Heart left ventricle (tissue), 16 donors: ENCODE measurements at regions of chr2 and their contacts with region 1.

Region 1: DNA sequence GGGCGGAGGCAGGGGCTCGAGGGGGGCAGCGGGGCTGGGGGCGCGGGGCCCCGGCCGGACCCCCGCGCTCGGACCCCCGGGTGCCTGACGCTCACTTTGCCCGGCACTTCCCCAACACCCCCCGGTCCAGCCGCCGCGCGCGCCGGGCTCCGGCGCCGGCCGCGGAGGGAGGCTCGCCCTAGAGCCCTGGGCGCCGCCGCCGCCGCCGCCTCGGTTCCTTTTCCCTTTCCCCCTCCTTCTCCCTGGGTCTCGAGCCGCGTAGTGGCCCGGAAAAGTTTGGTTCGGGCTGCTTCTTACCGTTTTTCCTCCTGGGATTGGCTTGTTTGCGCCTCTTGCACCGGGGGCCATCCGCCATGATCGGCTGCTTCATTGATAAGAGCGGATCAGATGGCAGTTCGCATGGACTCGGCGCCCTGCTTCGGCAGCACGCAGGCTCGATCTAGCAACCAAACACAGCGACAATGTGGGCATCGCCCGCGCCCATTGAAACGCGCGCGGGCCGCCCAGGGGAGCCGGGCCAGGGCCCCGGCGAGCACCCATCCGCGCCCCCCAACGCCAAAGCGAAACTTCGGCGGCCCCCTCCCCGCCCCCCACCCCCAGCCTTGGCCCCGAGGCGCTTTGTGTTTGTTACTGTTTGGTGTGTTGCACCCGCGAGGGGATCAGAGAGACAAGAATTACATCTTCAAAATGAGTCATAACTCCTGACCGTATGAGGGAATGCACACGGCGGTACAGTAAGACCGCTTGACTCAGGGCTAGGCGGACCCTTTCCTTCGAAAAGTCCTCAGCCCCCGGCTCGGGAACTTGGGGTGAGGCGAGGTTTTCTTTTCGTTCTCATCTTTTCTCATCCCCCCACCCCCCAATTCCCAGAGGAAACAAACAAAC is 2.7 kb downstream of the ZEB2 start:
- DNase-seq: peak; percentile 56 to 82 (median 73)
- ATAC-seq: peak; percentile 9 to 71 (median 54)
- H3K4me3 ChIP-seq: peak overlapping the region; percentile 63 to 96 (median 82)
- H3K27ac ChIP-seq: peak overlapping the region; percentile 91 to 99 (median 98)
- H3K4me1 ChIP-seq: peaks cover 0 to 31% (median 13%) of the 10 kb centered on the region in 12 donors
- H3K27me3 ChIP-seq: peaks cover 0 to 6% (median 0%) of the 10 kb centered on the region in 9 donors
- CTCF ChIP-seq: no peak
- POLR2A ChIP-seq: peak in 1 of 2 donors; percentile 17

Region 2: GRCh38 chr2:144048631-144049060 is 468.6 kb before region 1 on chr2:
- intact Hi-C with region 1: no loop called
- DNase-seq: no peak
- ATAC-seq: no peak
- H3K4me3 ChIP-seq: no peak overlapping the region
- H3K27ac ChIP-seq: no peak overlapping the region
- H3K4me1 ChIP-seq: peaks cover 0 to 5% (median 0%) of the 10 kb centered on the region in 12 donors
- H3K27me3 ChIP-seq: no peaks in the 10 kb centered on the region
- CTCF ChIP-seq: no peak
- POLR2A ChIP-seq: no peak

Region 3: GRCh38 chr2:144152817-144153271 is 364.4 kb before region 1 on chr2:
- intact Hi-C with region 1: loop called in 2 of 10 experiments (anchors 10 kb)
- DNase-seq: no peak
- ATAC-seq: peak in 3 of 4 donors; percentile 52 to 66 (median 60)
- H3K4me3 ChIP-seq: no peak overlapping the region
- H3K27ac ChIP-seq: peak overlapping the region in 2 of 12 donors; percentile 22 to 37
- H3K4me1 ChIP-seq: peaks cover 0 to 17% (median 0%) of the 10 kb centered on the region in 12 donors
- H3K27me3 ChIP-seq: no peaks in the 10 kb centered on the region
- CTCF ChIP-seq: peak in 1 of 12 donors; percentile 16
- POLR2A ChIP-seq: no peak

Region 4: DNA sequence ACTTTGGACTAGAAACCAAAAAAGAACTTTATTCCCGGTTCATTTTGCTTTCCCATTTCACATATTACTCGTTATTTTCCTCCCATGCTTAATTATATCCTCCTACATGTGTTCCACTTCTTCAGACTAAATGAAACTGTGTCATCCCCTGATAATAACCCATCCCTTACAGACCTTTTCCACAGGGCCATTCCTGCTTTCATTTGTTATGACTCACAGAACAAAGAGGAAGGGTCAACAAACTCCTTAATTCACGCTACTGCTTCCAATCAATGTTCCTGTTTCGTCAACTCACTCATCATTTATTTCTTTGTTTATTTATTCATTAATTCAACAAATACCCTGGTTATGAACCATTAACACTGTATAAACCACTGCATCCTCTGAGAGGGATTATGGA is 101.8 kb before region 1 on chr2:
- intact Hi-C with region 1: no loop called
- DNase-seq: no peak
- ATAC-seq: no peak
- H3K4me3 ChIP-seq: no peak overlapping the region
- H3K27ac ChIP-seq: peak overlapping the region in 2 of 12 donors; percentile 36 to 79
- H3K4me1 ChIP-seq: peaks cover 0 to 38% (median 4%) of the 10 kb centered on the region in 12 donors
- H3K27me3 ChIP-seq: no peaks in the 10 kb centered on the region
- CTCF ChIP-seq: no peak
- POLR2A ChIP-seq: no peak

Region 5: GRCh38 chr2:144430722-144431391 is 86.4 kb before region 1 on chr2:
- intact Hi-C with region 1: loop called in 3 of 10 experiments (anchors 5 kb)
- DNase-seq: peak in 2 of 5 donors; percentile 44 to 46
- ATAC-seq: peak; percentile 81 to 85 (median 82)
- H3K4me3 ChIP-seq: peak overlapping the region in 10 of 12 donors; percentile 3 to 50 (median 35)
- H3K27ac ChIP-seq: peak overlapping the region; percentile 37 to 82 (median 75)
- H3K4me1 ChIP-seq: peaks cover 0 to 97% (median 51%) of the 10 kb centered on the region in 12 donors
- H3K27me3 ChIP-seq: no peaks in the 10 kb centered on the region
- CTCF ChIP-seq: no peak
- POLR2A ChIP-seq: no peak

Region 6: DNA sequence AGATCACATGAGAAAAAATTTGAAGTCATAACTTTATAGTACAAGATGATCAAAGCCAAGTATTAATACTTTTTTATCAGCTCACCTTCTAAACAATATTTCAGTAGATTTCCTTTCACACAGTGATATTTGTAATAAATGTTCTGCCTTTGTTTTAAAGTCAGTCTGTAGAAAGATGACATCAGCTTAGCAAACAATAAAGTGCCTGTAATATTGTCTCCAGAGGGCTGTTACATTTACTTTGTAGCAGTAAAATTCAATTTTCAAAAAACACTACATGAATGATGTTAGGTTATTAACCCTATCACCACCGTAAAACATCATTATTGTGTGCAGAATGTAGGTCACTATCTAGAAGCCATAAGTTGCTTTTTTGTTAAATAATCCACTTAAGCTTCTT is 46.9 kb before region 1 on chr2:
- intact Hi-C with region 1: no loop called
- DNase-seq: no peak
- ATAC-seq: no peak
- H3K4me3 ChIP-seq: no peak overlapping the region
- H3K27ac ChIP-seq: peak overlapping the region in 1 of 12 donors; percentile 29
- H3K4me1 ChIP-seq: peaks cover under 1 to 98% (median 52%) of the 10 kb centered on the region in 12 donors
- H3K27me3 ChIP-seq: no peaks in the 10 kb centered on the region
- CTCF ChIP-seq: no peak
- POLR2A ChIP-seq: no peak

Region 7: GRCh38 chr2:144560251-144560650 is 43.0 kb after region 1 on chr2:
- intact Hi-C with region 1: no loop called
- DNase-seq: no peak
- ATAC-seq: no peak
- H3K4me3 ChIP-seq: no peak overlapping the region
- H3K27ac ChIP-seq: peak overlapping the region in 1 of 12 donors; percentile 27
- H3K4me1 ChIP-seq: peaks cover 0 to 6% (median 0%) of the 10 kb centered on the region in 12 donors
- H3K27me3 ChIP-seq: no peaks in the 10 kb centered on the region
- CTCF ChIP-seq: no peak
- POLR2A ChIP-seq: no peak

Region 8: DNA sequence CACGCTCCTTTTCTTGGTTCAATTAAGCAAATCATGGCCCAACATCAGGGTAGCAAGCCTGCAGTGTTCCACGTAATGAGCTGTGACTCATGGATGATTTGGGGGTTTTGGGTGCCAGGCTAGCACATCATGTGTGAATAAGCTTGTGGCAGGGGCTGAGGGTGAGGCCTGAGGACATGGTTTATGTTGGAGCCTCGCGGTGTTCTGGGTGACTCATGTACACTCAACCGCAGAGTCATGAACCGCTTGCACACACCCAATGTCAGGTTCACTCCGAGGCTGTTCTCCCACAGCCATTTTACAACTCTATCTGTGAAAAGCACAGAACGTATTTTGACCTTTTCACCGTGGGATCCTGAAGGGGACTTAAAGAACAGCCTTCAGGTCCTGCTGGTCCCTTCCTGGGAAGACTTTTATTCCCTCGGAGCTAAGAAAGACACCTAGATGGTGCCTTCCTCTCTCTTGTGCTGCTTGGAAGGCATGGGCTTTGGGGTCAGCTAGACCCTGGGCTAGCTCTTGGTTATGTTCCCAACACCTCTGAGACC is 142.6 kb after region 1 on chr2:
- intact Hi-C with region 1: loop called in 1 of 10 experiments (anchors 10 kb)
- DNase-seq: peak in 1 of 5 donors; percentile 31
- ATAC-seq: peak in 3 of 4 donors; percentile 31 to 56 (median 40)
- H3K4me3 ChIP-seq: no peak overlapping the region
- H3K27ac ChIP-seq: peak overlapping the region in 4 of 12 donors; percentile 4 to 93 (median 36)
- H3K4me1 ChIP-seq: peaks cover 0 to 48% (median 0%) of the 10 kb centered on the region in 12 donors
- H3K27me3 ChIP-seq: no peaks in the 10 kb centered on the region
- CTCF ChIP-seq: no peak
- POLR2A ChIP-seq: no peak

Region 9: GRCh38 chr2:144937910-144938709 is 420.9 kb after region 1 on chr2:
- intact Hi-C with region 1: loop called in 1 of 10 experiments (anchors 5 kb)
- DNase-seq: peak in 2 of 5 donors; percentile 29 to 49
- ATAC-seq: peak; percentile 73 to 87 (median 82)
- H3K4me3 ChIP-seq: peak overlapping the region in 1 of 12 donors; percentile 3
- H3K27ac ChIP-seq: peak overlapping the region; percentile 46 to 83 (median 69)
- H3K4me1 ChIP-seq: peaks cover 0 to 51% (median 8%) of the 10 kb centered on the region in 12 donors
- H3K27me3 ChIP-seq: no peaks in the 10 kb centered on the region
- CTCF ChIP-seq: no peak
- POLR2A ChIP-seq: no peak

Region 10: GRCh38 chr2:145022666-145023330 is 505.6 kb after region 1 on chr2:
- intact Hi-C with region 1: loop called in 1 of 10 experiments (anchors 10 kb)
- DNase-seq: no peak
- ATAC-seq: no peak
- H3K4me3 ChIP-seq: peak overlapping the region in 3 of 12 donors; percentile 3 to 32 (median 29)
- H3K27ac ChIP-seq: peak overlapping the region in 7 of 12 donors; percentile 6 to 62 (median 42)
- H3K4me1 ChIP-seq: peaks cover 0 to 18% (median 6%) of the 10 kb centered on the region in 12 donors
- H3K27me3 ChIP-seq: no peaks in the 10 kb centered on the region
- CTCF ChIP-seq: no peak
- POLR2A ChIP-seq: no peak